Activated B cell treated with CpG ODN at 0.5 μM for 24 hours (primary cell): ENCODE measurements at regions of chr12 and their contacts with region 1.

Region 1: GRCh38 chr12:6873094-6874014 is at the start of gene SPSB2:
- DNase-seq: peak; percentile 100
- ATAC-seq: peak; percentile 88
- H3K4me3 Mint-ChIP-seq: peak within 1 kb of the TSS; percentile 88
- H3K27ac Mint-ChIP-seq: peak within 1 kb of the TSS; percentile 85
- H3K4me1 Mint-ChIP-seq: peaks cover 37% of the 10 kb centered on the region
- H3K27me3 Mint-ChIP-seq: no peaks in the 10 kb centered on the region
- CTCF ChIP-seq: no peak
- total RNA-seq, gene SPSB2: 14.4 and 16.2 TPM in 2 replicates

Region 2: GRCh38 chr12:6662906-6663742 is 210.2 kb before region 1 on chr12 and contains the start of gene ING4:
- CTCF ChIA-PET with region 1: no interaction called
- POLR2A ChIA-PET with region 1: interaction called, 6 read pairs
- intact Hi-C with region 1: loop called (anchors 1 kb)
- DNase-seq: peak; percentile 80
- ATAC-seq: peak; percentile 97
- H3K4me3 Mint-ChIP-seq: peak within 1 kb of the TSS; percentile 97
- H3K27ac Mint-ChIP-seq: peak within 1 kb of the TSS; percentile 95
- H3K4me1 Mint-ChIP-seq: peaks cover 27% of the 10 kb centered on the region
- H3K27me3 Mint-ChIP-seq: no peaks in the 10 kb centered on the region
- CTCF ChIP-seq: no peak
- total RNA-seq, gene ING4: 31.6 and 39.2 TPM in 2 replicates

Region 3: GRCh38 chr12:6904280-6905278 is 31.2 kb after region 1 on chr12 and contains the start of gene LRRC23:
- CTCF ChIA-PET with region 1: interaction called, 8 read pairs
- POLR2A ChIA-PET with region 1: interaction called, 12 read pairs
- intact Hi-C with region 1: loop called (anchors 1 kb)
- DNase-seq: peak; percentile 87
- ATAC-seq: peak; percentile 98
- H3K4me3 Mint-ChIP-seq: no peak within 1 kb of the TSS
- H3K27ac Mint-ChIP-seq: no peak within 1 kb of the TSS
- H3K4me1 Mint-ChIP-seq: peaks cover 6% of the 10 kb centered on the region
- H3K27me3 Mint-ChIP-seq: no peaks in the 10 kb centered on the region
- CTCF ChIP-seq: no peak
- total RNA-seq, gene LRRC23: 7.7 and 8.8 TPM in 2 replicates

Region 4: GRCh38 chr12:6937481-6938297 is 64.3 kb after region 1 on chr12:
- CTCF ChIA-PET with region 1: interaction called, 26 read pairs
- POLR2A ChIA-PET with region 1: interaction called, 87 read pairs
- intact Hi-C with region 1: loop called (anchors 1 kb)
- DNase-seq: peak; percentile 84
- ATAC-seq: peak; percentile 92
- H3K4me3 Mint-ChIP-seq: peak overlapping the region; percentile 84
- H3K27ac Mint-ChIP-seq: peak overlapping the region; percentile 91
- H3K4me1 Mint-ChIP-seq: peaks cover 35% of the 10 kb centered on the region
- H3K27me3 Mint-ChIP-seq: no peaks in the 10 kb centered on the region
- CTCF ChIP-seq: no peak

Region 5: DNA sequence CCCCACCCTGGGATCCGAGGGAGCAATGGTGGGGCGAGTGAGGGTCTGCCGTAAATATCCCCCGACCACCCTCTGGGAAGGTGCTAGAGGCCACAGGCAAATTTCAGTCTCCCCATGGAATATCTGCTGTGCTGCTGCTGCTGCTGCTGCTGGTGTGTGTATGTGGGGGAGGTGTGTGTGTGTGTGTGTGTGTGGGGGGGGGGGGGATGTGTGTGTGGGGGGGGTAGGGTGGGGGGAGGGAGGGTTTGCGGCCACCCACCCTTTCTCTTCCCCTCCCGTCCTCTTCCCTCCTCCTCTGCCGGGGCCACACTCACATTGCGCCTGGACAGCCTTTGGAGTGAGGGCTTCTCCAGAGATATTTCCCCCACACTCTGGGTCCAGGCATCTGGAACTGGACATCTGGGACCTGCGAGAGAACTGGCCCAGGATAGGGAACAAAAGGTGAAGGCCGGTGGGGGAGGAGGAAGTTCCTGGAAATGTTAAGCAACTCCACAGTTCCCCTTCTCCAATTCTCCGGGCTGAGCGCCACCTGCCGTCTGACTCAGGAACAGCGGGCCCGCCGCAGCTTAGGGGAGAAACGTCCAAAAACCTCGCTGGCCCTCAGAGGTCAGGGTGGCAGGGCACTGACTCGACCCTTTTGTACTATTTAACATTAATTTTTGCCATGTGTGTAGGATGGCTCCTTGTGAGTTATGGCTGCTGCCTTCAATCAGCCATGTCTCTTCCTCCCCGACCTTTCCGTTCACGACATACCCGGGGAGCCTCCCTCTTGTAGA is 235.6 kb after region 1 on chr12 and contains the start of gene C1RL:
- CTCF ChIA-PET with region 1: interaction called, 29 read pairs
- POLR2A ChIA-PET with region 1: interaction called, 10 read pairs
- intact Hi-C with region 1: loop called (anchors 1 kb)
- DNase-seq: peak; percentile 83
- ATAC-seq: peak; percentile 53
- H3K4me3 Mint-ChIP-seq: peak within 1 kb of the TSS; percentile 92
- H3K27ac Mint-ChIP-seq: peak within 1 kb of the TSS; percentile 94
- H3K4me1 Mint-ChIP-seq: peaks cover 29% of the 10 kb centered on the region
- H3K27me3 Mint-ChIP-seq: no peaks in the 10 kb centered on the region
- CTCF ChIP-seq: peak; percentile 58
- total RNA-seq, gene C1RL: 13.5 and 19.2 TPM in 2 replicates